AG04449 (cell line): ENCODE measurements at regions of chr1 and their contacts with region 1.

Region 1: GRCh38 chr1:154335025-154335714 is 9.8 kb downstream of the ATP8B2 start:
- DNase-seq: no peak
- H3K4me3 ChIP-seq: no peak overlapping the region
- CTCF ChIP-seq: peak; percentile 81

Region 2: DNA sequence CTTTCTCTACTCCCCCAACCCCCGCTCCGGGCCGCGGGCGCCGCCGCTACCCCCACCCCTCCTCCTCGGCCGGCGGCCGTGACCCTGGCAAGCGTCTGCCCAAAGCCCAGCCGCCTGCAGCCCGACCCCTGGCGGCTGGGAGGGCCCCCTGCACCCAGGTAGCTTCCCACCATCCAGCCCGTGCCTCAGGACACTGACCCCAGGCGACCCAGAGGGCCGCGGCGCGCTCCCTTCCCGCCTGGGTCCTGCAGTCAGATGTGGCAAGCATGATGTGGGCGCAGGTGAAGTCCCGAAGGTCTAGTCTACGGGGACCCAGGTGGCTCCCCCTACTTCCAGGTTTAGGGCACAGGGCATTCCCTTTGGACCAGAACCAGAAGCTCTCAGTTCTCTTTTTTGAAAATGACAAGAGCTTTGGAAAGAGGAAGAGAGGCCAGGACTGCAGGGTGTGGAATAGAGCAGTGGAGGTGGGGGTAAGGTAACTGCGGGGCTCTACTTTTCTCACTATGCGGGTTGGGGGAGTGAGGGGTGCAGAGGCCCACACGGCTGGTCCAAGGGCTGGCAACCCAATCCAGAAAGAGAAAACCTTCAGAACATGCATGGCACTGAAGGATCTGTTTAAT is 388.4 kb before region 1 on chr1 and contains the start of gene DENND4B:
- CTCF ChIA-PET with region 1: no interaction called
- POLR2A ChIA-PET with region 1: no interaction called
- DNase-seq: no peak
- H3K4me3 ChIP-seq: peak within 1 kb of the TSS; percentile 77
- CTCF ChIP-seq: peak; percentile 98

Region 3: GRCh38 chr1:154272217-154272998 is 62.8 kb before region 1 on chr1 and contains the start of gene HAX1:
- CTCF ChIA-PET with region 1: interaction called, 65 read pairs
- POLR2A ChIA-PET with region 1: interaction called, 3 read pairs
- DNase-seq: peak; percentile 75
- H3K4me3 ChIP-seq: peak within 1 kb of the TSS; percentile 97
- CTCF ChIP-seq: peak; percentile 78

Region 4: DNA sequence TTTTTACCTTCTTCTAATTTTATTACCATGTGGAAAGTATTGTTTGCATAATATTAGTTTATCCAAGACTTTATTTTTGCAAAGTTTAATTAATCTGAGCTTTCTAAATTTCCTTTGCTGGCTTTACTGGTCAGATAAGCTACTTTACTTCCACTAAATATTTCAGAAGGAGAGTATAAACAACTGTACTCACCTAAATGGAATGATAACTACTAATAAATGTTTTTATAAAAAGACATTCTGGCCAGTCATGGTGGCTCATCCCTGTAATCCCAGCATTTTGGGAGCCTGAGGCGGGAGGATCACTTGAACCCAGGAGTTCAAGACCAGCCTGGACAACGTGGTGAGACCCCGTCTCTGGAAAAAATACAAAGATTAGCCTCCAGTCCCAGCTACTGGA is 26.2 kb after region 1 on chr1:
- CTCF ChIA-PET with region 1: interaction called, 16 read pairs
- POLR2A ChIA-PET with region 1: no interaction called
- DNase-seq: no peak
- H3K4me3 ChIP-seq: no peak overlapping the region
- CTCF ChIP-seq: no peak

Region 5: GRCh38 chr1:154419620-154420571 is 84.7 kb after region 1 on chr1:
- CTCF ChIA-PET with region 1: interaction called, 12 read pairs
- POLR2A ChIA-PET with region 1: no interaction called
- DNase-seq: peak; percentile 92
- H3K4me3 ChIP-seq: peak overlapping the region; percentile 38
- CTCF ChIP-seq: no peak